ENCODE measurements at regions of chr13 and their contacts with region 1.

Region 1: GRCh38 chr13:48492470-48493065 is 40.3 kb downstream of the RCBTB2 start:
- DNase-seq: peak; percentile 89
- H3K4me3 ChIP-seq: peak overlapping the region; percentile 61
- H3K27ac ChIP-seq: peak overlapping the region; percentile 68
- H3K4me1 ChIP-seq: peaks cover 51% of the 10 kb centered on the region
- CTCF ChIP-seq: no peak

Region 2: GRCh38 chr13:48291730-48292129 is 200.8 kb before region 1 on chr13:
- CTCF ChIA-PET with region 1: no interaction called
- POLR2A ChIA-PET with region 1: no interaction called
- intact Hi-C with region 1: no loop called
- DNase-seq: no peak
- H3K4me3 ChIP-seq: no peak overlapping the region
- H3K27ac ChIP-seq: no peak overlapping the region
- H3K4me1 ChIP-seq: peaks cover 17% of the 10 kb centered on the region
- CTCF ChIP-seq: no peak

Region 3: GRCh38 chr13:48532506-48533499 is 40.2 kb after region 1 on chr13 and contains the start of gene RCBTB2:
- CTCF ChIA-PET with region 1: no interaction called
- POLR2A ChIA-PET with region 1: interaction called, 7 read pairs
- intact Hi-C with region 1: loop called (anchors 1 kb)
- DNase-seq: peak; percentile 99
- H3K4me3 ChIP-seq: peak within 1 kb of the TSS; percentile 73
- H3K27ac ChIP-seq: peak within 1 kb of the TSS; percentile 80
- H3K4me1 ChIP-seq: peaks cover 59% of the 10 kb centered on the region
- CTCF ChIP-seq: no peak
- total RNA-seq, gene RCBTB2: 4.4 and 9.0 TPM in 2 replicates

Measured in OCI-LY7 (cell line).